ENCODE measurements at regions of chr10 and their contacts with region 1.

Region 1: GRCh38 chr10:11515596-11516430 is 95.6 kb downstream of the USP6NL start:
- DNase-seq: peak; percentile 63
- H3K4me3 Mint-ChIP-seq: no peak overlapping the region
- H3K27ac Mint-ChIP-seq: no peak overlapping the region
- H3K4me1 Mint-ChIP-seq: peaks cover 18% of the 10 kb centered on the region
- H3K27me3 Mint-ChIP-seq: peaks cover 1% of the 10 kb centered on the region

Region 2: DNA sequence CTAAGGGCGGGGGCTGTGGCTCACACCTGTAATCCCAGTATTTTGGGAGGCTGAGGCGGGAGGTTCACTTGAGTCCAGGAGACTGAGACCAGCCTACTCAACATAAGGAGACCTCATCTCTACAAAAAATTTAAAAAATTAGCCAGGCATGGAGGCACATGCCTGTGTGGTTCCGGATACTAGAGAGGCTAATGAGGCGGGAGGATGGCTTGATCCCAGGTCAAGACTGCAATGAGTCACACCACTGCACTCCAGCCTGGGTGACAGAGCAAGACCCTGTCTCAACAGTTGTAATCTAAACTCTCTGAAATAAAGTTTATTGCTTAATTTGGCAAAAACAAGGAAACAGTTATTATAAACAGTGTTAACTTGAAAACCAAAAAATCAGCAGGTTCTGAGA is 27.7 kb before region 1 on chr10:
- CTCF ChIA-PET with region 1: no interaction called
- POLR2A ChIA-PET with region 1: no interaction called
- intact Hi-C with region 1: no loop called
- DNase-seq: no peak
- H3K4me3 Mint-ChIP-seq: no peak overlapping the region
- H3K27ac Mint-ChIP-seq: no peak overlapping the region
- H3K4me1 Mint-ChIP-seq: no peaks in the 10 kb centered on the region
- H3K27me3 Mint-ChIP-seq: no peaks in the 10 kb centered on the region

Region 3: DNA sequence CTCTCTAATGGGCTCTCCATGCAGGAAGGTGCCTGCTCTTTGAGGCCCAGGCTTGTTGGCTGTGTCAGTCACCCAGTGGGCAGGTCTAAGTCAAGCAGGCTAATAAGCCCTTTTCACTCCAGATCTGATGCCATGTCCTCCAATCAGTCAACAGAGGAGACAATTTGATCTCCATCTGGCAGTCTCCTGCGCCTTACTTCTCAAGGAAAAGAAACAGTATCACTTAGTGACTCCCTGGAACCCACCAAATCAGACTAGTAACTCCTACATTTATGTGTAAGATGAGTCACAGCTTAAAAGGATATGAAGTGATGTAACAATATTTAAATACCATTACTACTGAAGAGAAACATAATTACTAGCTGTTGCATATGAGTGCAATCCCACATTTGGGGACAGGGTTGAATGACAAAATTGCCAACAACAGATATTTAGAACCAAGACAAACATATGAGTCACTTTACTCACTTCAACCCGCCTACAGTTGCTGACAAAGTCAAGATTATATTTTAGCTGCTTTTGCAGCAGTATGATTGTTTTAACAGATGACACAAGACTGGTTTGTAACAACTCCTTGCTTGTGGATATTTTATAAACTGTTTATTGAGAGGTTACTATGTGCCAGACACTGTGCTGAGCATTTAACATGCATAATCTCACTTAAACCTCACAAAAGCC is 23.5 kb after region 1 on chr10:
- CTCF ChIA-PET with region 1: interaction called, 3 read pairs
- POLR2A ChIA-PET with region 1: no interaction called
- intact Hi-C with region 1: loop called (anchors 2 kb)
- DNase-seq: no peak
- H3K4me3 Mint-ChIP-seq: no peak overlapping the region
- H3K27ac Mint-ChIP-seq: no peak overlapping the region
- H3K4me1 Mint-ChIP-seq: peaks cover 13% of the 10 kb centered on the region
- H3K27me3 Mint-ChIP-seq: no peaks in the 10 kb centered on the region

Region 4: DNA sequence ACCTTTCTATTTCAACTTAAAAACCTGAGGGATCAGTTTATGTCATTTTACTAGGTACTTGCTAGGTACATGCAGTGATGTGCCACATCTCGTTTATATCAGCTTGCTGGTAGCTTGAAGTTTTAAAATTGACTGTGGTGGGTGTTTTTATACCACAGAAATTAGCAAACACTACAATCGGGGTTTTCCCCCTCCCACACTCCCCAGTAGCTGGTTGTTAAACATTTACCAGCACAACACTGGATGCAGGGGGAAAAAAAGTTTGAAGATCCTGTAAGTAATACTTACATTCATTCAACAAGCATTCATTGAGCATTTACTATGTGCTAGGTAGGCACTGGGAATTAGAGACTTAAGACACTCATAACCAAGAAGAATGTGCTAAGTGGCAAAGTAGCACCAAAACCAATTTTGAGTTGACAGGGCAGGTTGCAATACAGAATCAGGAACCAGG is 63.0 kb after region 1 on chr10:
- CTCF ChIA-PET with region 1: interaction called, 4 read pairs
- POLR2A ChIA-PET with region 1: no interaction called
- intact Hi-C with region 1: loop called (anchors 2 kb)
- DNase-seq: peak; percentile 68
- H3K4me3 Mint-ChIP-seq: no peak overlapping the region
- H3K27ac Mint-ChIP-seq: no peak overlapping the region
- H3K4me1 Mint-ChIP-seq: peaks cover 33% of the 10 kb centered on the region
- H3K27me3 Mint-ChIP-seq: peaks cover 6% of the 10 kb centered on the region

Region 5: GRCh38 chr10:11631890-11632587 is 116.2 kb after region 1 on chr10:
- CTCF ChIA-PET with region 1: no interaction called
- POLR2A ChIA-PET with region 1: no interaction called
- intact Hi-C with region 1: loop called (anchors 1 kb)
- DNase-seq: peak; percentile 58
- H3K4me3 Mint-ChIP-seq: no peak overlapping the region
- H3K27ac Mint-ChIP-seq: no peak overlapping the region
- H3K4me1 Mint-ChIP-seq: peaks cover 12% of the 10 kb centered on the region
- H3K27me3 Mint-ChIP-seq: peaks cover 12% of the 10 kb centered on the region

Region 6: GRCh38 chr10:11713186-11713743 is 197.5 kb after region 1 on chr10:
- CTCF ChIA-PET with region 1: interaction called, 4 read pairs
- POLR2A ChIA-PET with region 1: no interaction called
- intact Hi-C with region 1: loop called (anchors 1 kb)
- DNase-seq: no peak
- H3K4me3 Mint-ChIP-seq: no peak overlapping the region
- H3K27ac Mint-ChIP-seq: no peak overlapping the region
- H3K4me1 Mint-ChIP-seq: peaks cover 15% of the 10 kb centered on the region
- H3K27me3 Mint-ChIP-seq: peaks cover 46% of the 10 kb centered on the region

Region 7: GRCh38 chr10:11757821-11758463 is 242.1 kb after region 1 on chr10:
- CTCF ChIA-PET with region 1: interaction called, 124 read pairs
- POLR2A ChIA-PET with region 1: interaction called, 3 read pairs
- intact Hi-C with region 1: loop called (anchors 1 kb)
- DNase-seq: peak; percentile 90
- H3K4me3 Mint-ChIP-seq: no peak overlapping the region
- H3K27ac Mint-ChIP-seq: no peak overlapping the region
- H3K4me1 Mint-ChIP-seq: peaks cover 1% of the 10 kb centered on the region
- H3K27me3 Mint-ChIP-seq: no peaks in the 10 kb centered on the region

Region 8: GRCh38 chr10:12121673-12122072 is 605.9 kb after region 1 on chr10:
- CTCF ChIA-PET with region 1: no interaction called
- POLR2A ChIA-PET with region 1: no interaction called
- intact Hi-C with region 1: loop called (anchors 5 kb)
- DNase-seq: no peak
- H3K4me3 Mint-ChIP-seq: peak overlapping the region; percentile 64
- H3K27ac Mint-ChIP-seq: peak overlapping the region; percentile 97
- H3K4me1 Mint-ChIP-seq: peaks cover 33% of the 10 kb centered on the region
- H3K27me3 Mint-ChIP-seq: no peaks in the 10 kb centered on the region